Pancreas (tissue), 10 donors: ENCODE measurements at regions of chr17 and their contacts with region 1.

Region 1: DNA sequence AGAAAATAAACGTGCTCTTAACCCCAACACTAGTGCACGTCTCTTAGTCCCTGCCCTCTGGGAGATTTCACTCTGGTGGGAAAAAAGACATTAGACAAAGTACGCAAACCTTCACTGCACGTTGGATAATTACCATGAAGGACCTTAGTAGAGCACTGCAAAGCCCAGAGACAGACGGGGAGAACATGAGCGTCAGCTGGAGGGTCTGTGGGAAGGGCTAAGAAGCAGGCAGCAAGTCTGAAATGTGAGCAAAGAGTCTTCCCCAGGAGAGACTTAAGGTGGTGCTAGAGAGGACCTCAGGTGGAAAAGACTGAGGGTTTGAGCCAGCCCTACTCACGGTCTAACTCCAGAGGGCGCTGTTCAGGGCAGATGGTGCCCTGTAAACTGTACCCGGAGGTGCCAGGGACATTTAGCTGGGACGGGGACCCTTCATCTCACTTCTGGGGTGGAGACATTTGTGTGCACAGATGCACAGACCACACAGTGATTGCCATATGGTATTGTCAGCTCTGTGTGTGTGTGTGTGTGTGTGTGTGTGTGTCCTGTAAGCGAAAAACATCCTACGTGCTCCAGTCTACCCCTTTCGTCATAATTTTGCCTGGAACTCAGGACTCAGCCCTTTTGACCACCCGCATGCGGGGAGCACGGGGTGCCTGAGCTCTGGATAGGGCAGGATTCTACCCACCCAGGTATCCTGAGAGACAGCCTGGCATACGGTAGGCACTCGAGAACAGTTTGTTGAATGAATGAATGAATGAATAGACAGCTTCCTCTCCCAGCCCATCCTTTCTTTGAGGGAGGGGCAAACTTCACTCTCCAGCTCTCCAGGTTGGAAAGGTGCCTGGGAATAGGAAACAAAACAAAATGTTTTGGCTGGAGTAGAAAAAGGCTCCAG is 10.1 kb upstream of the STAC2 start:
- DNase-seq: peak in 1 of 6 donors; percentile 12
- ATAC-seq: peak; percentile 40 to 64 (median 52)
- H3K4me3 ChIP-seq: no peak overlapping the region
- H3K27ac ChIP-seq: no peak overlapping the region
- H3K4me1 ChIP-seq: no peaks in the 10 kb centered on the region
- H3K27me3 ChIP-seq: peaks cover 0 to 3% (median 0%) of the 10 kb centered on the region in 4 donors
- CTCF ChIP-seq: peak in 2 of 4 donors; percentile 16 to 21

Region 2: GRCh38 chr17:38970128-38970527 is 265.7 kb before region 1 on chr17:
- intact Hi-C with region 1: loop called in 2 of 3 experiments (anchors 10 kb)
- DNase-seq: no peak
- ATAC-seq: no peak
- H3K4me3 ChIP-seq: no peak overlapping the region
- H3K27ac ChIP-seq: no peak overlapping the region
- H3K4me1 ChIP-seq: no peaks in the 10 kb centered on the region
- H3K27me3 ChIP-seq: no peaks in the 10 kb centered on the region
- CTCF ChIP-seq: no peak

Region 3: DNA sequence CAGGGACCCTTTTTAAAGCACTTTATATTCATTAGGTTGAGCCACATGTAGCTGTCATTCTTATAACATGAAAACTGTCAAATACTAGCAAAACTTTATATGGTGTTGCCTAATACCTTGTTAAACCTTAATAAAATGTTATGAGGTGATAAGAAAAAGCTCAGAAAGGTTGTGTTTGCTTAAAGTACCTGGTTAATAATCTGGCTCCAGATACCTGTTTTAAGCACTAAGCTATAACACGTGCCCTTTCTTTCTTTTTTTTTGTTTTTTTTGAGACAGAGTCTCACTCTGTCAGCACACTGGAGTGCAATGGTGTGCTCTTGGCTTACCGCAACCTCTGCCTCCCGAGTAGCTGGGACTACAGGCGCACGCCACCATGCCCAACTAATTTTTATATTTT is 48.9 kb after region 1 on chr17:
- intact Hi-C with region 1: no loop called
- DNase-seq: no peak
- ATAC-seq: peak in 1 of 4 donors; percentile 17
- H3K4me3 ChIP-seq: no peak overlapping the region
- H3K27ac ChIP-seq: no peak overlapping the region
- H3K4me1 ChIP-seq: peaks cover 0 to 10% (median 6%) of the 10 kb centered on the region in 3 donors
- H3K27me3 ChIP-seq: no peaks in the 10 kb centered on the region
- CTCF ChIP-seq: no peak